Activated T-helper 1 cell treated with anti-CD3 and anti-CD28 coated beads, Interleukin-12 subunit alpha, Interleukin-12 subunit beta, Interleukin-2, Interleukin-4 antibody, amounts not matched to agents 30 ng/mL and 10 ng/mL and 1 ng/mL, durations not matched to agents 14 hours and 24 hours and 36 hours (primary cell): ENCODE measurements at regions of chr10 and their contacts with region 1.

Region 1: DNA sequence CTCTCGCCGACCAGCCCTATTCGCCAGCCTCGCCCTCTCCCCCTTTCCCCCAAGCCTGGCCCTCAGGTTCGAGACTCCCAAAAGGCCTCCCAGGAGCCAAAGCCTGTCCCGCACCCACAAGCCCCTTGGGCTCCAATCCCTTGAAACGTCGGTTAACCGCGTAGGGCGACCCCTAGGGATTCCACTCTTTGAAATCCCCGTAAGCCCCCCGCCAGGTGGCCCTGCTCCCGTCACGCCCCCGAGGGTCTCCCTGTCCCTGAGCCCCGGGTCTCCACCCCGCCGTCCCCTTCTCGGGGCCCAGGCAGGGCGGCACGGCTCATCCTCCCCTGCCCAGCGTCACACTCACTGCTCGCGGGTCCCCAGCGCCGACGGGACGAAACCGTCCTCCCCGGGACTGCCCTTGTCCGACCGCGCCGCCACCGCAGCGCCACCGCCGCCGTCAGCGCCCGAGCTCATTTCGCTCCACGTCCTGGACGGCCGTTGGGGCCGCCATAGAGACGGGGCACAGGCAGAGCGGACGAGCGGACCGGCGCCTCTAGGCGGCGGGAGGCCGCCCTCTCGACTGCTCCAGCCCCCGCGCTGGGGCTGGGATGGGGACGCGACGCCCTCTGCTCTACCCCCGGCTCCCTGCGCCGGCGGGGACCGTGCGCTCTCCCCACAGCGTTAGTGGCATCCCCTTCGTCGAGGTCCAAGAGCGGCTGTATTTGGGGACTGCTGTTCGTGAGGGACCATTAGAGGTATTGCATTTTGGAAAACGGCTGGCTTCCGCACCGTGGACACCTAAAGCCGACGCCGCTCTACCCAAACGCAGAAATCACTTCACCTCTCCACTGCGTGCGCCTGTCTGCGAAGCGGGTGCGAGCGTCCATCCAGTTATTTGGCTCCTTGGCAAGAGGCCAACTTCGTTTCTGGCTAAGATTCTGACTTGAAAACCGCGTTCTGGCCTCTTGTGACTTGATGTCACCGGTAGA is at the start of gene EEF1AKMT2:
- DNase-seq: peak; percentile 78
- H3K4me3 Mint-ChIP-seq: peak within 1 kb of the TSS; percentile 94
- H3K27ac Mint-ChIP-seq: peak within 1 kb of the TSS; percentile 92
- H3K4me1 Mint-ChIP-seq: peaks cover 24% of the 10 kb centered on the region
- H3K27me3 Mint-ChIP-seq: peaks cover 3% of the 10 kb centered on the region
- total RNA-seq, gene EEF1AKMT2: 20.5 and 21.3 TPM in 2 replicates

Region 2: DNA sequence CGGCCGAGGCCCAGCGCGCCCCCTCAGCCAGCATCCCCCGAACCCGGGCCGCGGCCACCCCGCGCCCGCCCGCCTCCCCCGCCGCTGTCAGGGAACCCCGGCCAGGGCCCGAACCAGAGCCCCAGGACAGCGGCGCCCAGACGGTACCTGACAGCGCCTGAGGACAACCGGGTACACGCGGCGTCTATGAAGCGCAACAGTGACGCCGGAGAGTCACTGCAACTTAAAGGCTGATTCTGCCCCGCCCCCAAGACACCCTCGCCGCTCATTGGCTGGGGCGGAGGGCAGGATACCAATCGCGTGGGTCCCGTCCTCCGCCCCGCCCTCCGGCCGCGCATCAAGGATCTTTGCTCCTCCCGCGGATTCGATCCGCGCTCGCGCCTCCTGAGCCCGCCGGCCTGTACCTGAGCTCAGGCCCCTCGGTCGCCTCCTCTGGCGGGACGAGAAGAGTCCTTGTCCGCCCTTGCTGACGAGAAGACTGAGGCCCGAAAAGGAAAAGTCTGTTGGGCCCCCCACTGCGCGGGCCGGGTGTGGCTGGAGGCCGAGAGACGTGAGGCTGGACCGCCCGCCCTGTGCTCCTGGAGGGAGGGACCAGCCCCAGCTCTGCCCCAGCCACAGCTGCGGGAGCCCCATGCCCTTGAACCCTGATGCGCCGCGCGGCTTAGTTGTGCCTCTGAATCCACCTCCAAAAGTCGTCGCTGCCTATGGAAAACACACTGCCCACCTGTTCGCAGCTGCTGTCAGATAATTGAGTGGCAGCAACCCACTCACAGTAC is 372.7 kb before region 1 on chr10 and contains the start of gene OAT:
- intact Hi-C with region 1: loop called (anchors 2 kb)
- DNase-seq: peak; percentile 95
- H3K4me3 Mint-ChIP-seq: peak within 1 kb of the TSS; percentile 81
- H3K27ac Mint-ChIP-seq: peak within 1 kb of the TSS; percentile 29
- H3K4me1 Mint-ChIP-seq: peaks cover 12% of the 10 kb centered on the region
- H3K27me3 Mint-ChIP-seq: peaks cover 22% of the 10 kb centered on the region
- total RNA-seq, gene OAT: 35.6 and 37.9 TPM in 2 replicates

Region 3: DNA sequence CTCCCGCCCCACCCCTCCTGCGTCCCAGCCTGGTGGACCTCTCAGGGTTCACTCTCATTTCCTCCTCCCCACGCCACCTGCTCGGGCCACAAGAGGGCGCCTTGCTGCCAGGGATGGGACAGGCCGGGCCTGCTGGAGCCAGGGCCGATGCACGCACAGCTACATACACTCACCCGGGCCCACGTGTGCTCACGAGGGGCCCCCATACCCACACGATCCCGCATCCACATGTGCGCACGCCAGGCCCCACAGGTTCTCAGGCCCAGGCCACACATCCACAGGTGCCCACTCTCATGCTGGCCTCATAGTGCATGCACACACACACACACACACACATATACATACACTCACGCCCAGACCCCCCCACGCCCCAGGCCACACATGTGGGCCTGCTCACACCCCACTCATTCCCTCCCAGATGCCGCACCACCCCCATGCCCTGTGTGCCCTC is 261.4 kb before region 1 on chr10:
- intact Hi-C with region 1: loop called (anchors 2 kb)
- DNase-seq: peak; percentile 78
- H3K4me3 Mint-ChIP-seq: no peak overlapping the region
- H3K27ac Mint-ChIP-seq: no peak overlapping the region
- H3K4me1 Mint-ChIP-seq: peaks cover 5% of the 10 kb centered on the region
- H3K27me3 Mint-ChIP-seq: peaks cover 10% of the 10 kb centered on the region

Region 4: DNA sequence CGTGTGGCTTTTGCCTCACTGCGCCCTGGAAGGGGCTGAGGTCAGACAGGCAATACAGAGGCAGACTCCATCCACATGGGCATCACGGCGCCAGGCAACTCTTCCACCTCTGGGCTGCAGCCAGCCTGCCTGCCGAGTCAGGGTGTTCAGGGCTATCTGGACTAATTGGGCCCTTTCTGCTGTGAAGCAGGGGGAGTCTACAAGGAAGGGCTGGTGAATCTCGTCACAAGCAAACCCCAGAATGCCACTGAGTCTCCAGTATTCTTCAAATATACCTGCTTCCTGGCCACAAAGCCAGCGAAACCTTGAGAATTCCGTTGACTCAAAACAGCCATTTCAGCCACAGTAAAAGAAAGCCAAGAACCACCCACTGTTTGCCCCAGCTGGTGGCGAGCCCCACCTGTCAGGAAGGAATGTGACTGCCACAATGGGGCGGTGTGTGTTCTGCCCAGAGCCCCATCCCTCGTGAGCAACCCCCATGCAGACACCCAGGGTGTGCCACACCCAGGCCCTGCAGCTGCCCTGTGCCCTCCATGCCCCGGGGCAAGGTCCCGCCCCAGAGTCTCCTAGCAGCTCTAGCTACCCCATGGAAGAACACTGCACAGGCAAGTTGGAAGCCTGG is 164.8 kb before region 1 on chr10:
- intact Hi-C with region 1: loop called (anchors 5 kb)
- DNase-seq: peak; percentile 42
- H3K4me3 Mint-ChIP-seq: peak overlapping the region; percentile 42
- H3K27ac Mint-ChIP-seq: peak overlapping the region; percentile 45
- H3K4me1 Mint-ChIP-seq: peaks cover 31% of the 10 kb centered on the region
- H3K27me3 Mint-ChIP-seq: peaks cover 13% of the 10 kb centered on the region

Region 5: GRCh38 chr10:124732931-124733570 is 58.6 kb before region 1 on chr10:
- intact Hi-C with region 1: no loop called
- DNase-seq: peak; percentile 32
- H3K4me3 Mint-ChIP-seq: peak overlapping the region; percentile 53
- H3K27ac Mint-ChIP-seq: peak overlapping the region; percentile 80
- H3K4me1 Mint-ChIP-seq: peaks cover 59% of the 10 kb centered on the region
- H3K27me3 Mint-ChIP-seq: peaks cover 2% of the 10 kb centered on the region

Region 6: DNA sequence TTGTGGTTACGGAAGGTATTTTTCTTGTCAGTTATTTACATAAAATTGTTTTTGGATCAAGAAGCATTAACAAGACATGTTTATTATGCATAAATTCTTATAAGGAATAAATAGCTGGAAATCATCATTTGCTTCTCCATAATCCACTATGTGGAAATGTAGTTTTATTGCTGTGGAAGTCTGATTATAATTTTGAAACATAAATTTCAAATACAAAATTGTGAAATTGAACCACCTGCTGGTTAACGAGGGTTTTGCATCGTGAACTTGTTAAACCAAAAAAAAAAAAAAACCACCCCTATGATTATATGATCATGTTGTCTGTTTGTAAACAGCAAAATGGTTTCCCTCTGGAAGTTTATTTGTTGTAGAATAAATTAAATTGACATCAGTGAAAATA is 35.8 kb after region 1 on chr10:
- intact Hi-C with region 1: loop called (anchors 2 kb)
- DNase-seq: no peak
- H3K4me3 Mint-ChIP-seq: no peak overlapping the region
- H3K27ac Mint-ChIP-seq: no peak overlapping the region
- H3K4me1 Mint-ChIP-seq: no peaks in the 10 kb centered on the region
- H3K27me3 Mint-ChIP-seq: no peaks in the 10 kb centered on the region